OCI-LY7 (cell line): ENCODE measurements at regions of chr14 and their contacts with region 1.

Region 1: GRCh38 chr14:77097700-77098528 is at the start of gene CIPC:
- DNase-seq: peak; percentile 99
- H3K4me3 ChIP-seq: peak within 1 kb of the TSS; percentile 82
- H3K27ac ChIP-seq: peak within 1 kb of the TSS; percentile 76
- H3K4me1 ChIP-seq: peaks cover 49% of the 10 kb centered on the region
- CTCF ChIP-seq: no peak
- total RNA-seq, gene CIPC: 31.7 and 43.4 TPM in 2 replicates

Region 2: DNA sequence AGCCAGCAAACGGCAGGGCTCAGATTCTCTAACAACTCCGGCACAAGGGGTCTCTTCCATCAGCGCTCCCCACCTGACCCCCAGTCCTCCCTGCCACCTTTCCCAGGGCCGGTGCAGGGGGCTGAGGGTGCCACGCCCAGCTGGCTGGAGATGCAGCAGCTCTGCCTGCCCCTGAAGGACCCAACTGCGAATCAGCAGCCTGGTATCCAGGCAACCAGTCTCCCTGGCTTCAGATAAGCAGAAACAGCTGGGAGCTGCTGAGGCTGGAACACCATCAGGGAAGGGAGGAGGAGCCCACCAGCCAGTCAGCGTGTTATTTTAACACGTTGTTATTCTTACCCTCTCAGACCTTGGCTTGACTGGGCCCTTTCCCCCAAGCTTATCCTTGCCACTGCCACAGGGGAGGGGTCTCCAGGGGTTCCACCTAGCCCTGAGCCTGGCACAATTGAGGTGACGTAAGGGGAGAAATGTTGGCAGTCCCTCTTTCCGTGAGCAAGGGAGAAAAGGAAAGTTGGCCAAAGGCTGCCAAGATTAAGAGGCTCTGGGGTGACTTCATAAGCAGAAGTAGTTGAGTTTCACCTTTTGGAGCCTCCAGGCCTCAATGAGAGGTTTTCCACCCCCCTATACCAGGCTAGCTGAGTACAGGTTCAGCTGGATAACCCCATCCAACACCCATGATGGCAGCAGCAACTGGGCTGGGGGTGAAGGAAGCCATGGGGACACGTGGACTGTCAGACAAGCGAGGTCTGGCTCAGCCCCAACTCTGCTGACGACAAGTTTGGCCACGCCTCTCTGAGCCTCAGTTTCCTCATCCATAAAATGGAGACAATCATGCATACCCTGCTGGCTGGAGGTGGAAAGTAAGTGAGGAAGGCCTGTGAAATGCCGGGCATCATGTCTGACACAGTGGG is 160.5 kb before region 1 on chr14:
- CTCF ChIA-PET with region 1: no interaction called
- POLR2A ChIA-PET with region 1: no interaction called
- intact Hi-C with region 1: no loop called
- DNase-seq: no peak
- H3K4me3 ChIP-seq: no peak overlapping the region
- H3K27ac ChIP-seq: no peak overlapping the region
- H3K4me1 ChIP-seq: no peaks in the 10 kb centered on the region
- CTCF ChIP-seq: no peak

Region 3: GRCh38 chr14:77033622-77034521 is 64.0 kb before region 1 on chr14:
- CTCF ChIA-PET with region 1: no interaction called
- POLR2A ChIA-PET with region 1: interaction called, 3 read pairs
- intact Hi-C with region 1: loop called (anchors 2 kb)
- DNase-seq: peak; percentile 84
- H3K4me3 ChIP-seq: peak overlapping the region; percentile 70
- H3K27ac ChIP-seq: peak overlapping the region; percentile 87
- H3K4me1 ChIP-seq: peaks cover 90% of the 10 kb centered on the region
- CTCF ChIP-seq: no peak

Region 4: DNA sequence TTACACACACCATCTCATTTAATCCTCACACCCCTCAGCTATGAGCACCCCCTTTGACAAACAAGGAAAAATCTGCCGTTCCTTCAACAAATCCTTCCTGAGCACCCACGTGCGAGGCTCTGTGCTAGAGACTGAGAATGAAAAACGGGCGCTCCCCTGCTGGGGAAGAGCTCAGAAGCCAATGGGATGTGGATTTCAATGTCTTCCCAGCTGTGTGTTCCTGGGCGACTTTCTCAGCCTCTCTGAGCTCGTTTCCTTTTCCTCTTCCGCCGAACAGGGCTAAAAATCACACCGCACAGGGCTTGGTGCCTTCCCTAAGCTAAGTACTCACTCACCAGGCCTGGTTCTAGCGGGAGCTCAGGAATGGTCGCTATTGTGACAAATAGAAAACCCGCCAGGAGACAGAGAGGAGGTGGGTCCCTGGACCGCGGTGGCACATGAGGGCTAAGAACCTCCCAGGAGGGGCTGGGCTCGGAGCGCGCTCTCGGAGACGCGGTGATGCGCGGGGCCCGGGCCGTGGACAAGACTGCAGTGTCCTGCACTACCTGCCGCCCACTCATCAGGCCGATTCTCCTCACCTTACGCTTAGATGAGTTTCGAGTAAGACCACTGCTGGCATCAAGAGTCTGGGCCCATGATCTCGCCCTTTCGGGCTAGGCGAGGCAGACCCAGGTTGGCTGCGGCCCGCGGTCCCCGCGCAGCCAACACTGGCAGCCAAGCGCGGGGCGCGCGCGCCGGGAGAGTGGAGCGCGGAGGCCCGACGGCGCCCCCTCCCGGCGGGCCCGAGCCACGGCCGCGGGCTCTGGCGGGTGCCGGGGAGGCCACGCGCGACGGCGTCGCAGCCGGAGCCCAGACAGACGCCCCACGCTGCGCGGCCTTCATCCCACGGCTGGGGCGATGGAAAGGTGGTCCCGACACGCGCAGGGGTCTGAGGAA is 26.7 kb after region 1 on chr14:
- CTCF ChIA-PET with region 1: interaction called, 10 read pairs
- POLR2A ChIA-PET with region 1: interaction called, 51 read pairs
- intact Hi-C with region 1: loop called (anchors 1 kb)
- DNase-seq: peak; percentile 51
- H3K4me3 ChIP-seq: peak overlapping the region; percentile 39
- H3K27ac ChIP-seq: peak overlapping the region; percentile 96
- H3K4me1 ChIP-seq: peaks cover 69% of the 10 kb centered on the region
- CTCF ChIP-seq: peak; percentile 56

Region 5: GRCh38 chr14:77219591-77219990 is 121.7 kb after region 1 on chr14:
- CTCF ChIA-PET with region 1: no interaction called
- POLR2A ChIA-PET with region 1: no interaction called
- intact Hi-C with region 1: no loop called
- DNase-seq: no peak
- H3K4me3 ChIP-seq: no peak overlapping the region
- H3K27ac ChIP-seq: no peak overlapping the region
- H3K4me1 ChIP-seq: no peaks in the 10 kb centered on the region
- CTCF ChIP-seq: no peak

Region 6: GRCh38 chr14:77320238-77320935 is 222.5 kb after region 1 on chr14 and contains the start of gene POMT2:
- CTCF ChIA-PET with region 1: no interaction called
- POLR2A ChIA-PET with region 1: no interaction called
- intact Hi-C with region 1: loop called (anchors 2 kb)
- DNase-seq: peak; percentile 92
- H3K4me3 ChIP-seq: peak within 1 kb of the TSS; percentile 81
- H3K27ac ChIP-seq: peak within 1 kb of the TSS; percentile 80
- H3K4me1 ChIP-seq: peaks cover 25% of the 10 kb centered on the region
- CTCF ChIP-seq: peak; percentile 51; the same call in 1 of the 2 replicates
- total RNA-seq, gene POMT2: 5.9 and 8.2 TPM in 2 replicates

Region 7: GRCh38 chr14:77882098-77882497 is 784.2 kb after region 1 on chr14:
- CTCF ChIA-PET with region 1: no interaction called
- POLR2A ChIA-PET with region 1: no interaction called
- intact Hi-C with region 1: no loop called
- DNase-seq: no peak
- H3K4me3 ChIP-seq: no peak overlapping the region
- H3K27ac ChIP-seq: no peak overlapping the region
- H3K4me1 ChIP-seq: no peaks in the 10 kb centered on the region
- CTCF ChIP-seq: no peak